ENCODE measurements at regions of chr7 and their contacts with region 1.

Region 1: DNA sequence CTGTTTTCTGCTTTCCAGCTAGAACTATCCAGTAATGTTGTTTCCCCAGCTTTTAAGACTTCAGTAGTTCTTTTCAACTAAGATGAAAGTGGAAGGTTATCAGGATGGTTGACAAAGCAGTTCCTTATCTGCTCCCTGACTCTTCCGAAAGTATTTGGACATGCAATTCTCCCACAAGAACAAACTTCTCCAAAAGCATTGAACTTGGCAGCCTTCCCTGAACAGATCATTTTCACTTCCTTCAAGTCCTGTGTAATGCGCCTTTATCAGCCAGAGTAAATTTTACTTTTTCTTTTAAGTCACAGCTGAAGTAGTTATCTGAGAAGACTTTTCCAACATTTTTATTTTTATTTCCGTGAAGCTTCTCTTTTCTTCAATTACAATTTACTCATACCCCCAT is 39.7 kb downstream of the CDC14C start:
- DNase-seq: no peak
- ATAC-seq: peak; percentile 69

Region 2: GRCh38 chr7:50706451-50706937 is 1742.4 kb after region 1 on chr7:
- intact Hi-C with region 1: loop called (anchors 10 kb)
- DNase-seq: no peak
- ATAC-seq: no peak